Vagina (tissue), 2 donors: ENCODE measurements at regions of chr3 and their contacts with region 1.

Region 1: DNA sequence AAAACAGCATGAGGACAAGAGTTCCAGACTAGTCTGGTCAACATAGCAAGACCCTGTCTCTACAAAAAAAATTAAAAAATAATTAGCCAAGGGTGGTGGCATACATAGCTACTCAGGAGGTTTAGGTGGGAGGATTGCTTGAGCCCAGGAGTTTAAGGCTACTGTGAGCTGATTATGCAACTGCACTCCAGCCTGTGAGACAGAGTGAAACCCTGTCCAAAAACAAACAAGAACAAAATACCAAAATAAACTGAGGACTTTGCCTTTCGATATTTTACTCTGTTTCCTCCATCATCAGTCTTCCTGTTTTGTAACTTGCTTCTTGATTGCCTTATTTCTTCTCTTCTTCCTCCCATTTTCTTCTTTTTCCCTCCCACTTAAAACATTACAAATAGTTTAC is 504.4 kb downstream of the ROBO1 start:
- DNase-seq: no peak
- H3K4me3 ChIP-seq: no peak overlapping the region
- H3K27ac ChIP-seq: no peak overlapping the region
- H3K4me1 ChIP-seq: no peaks in the 10 kb centered on the region
- H3K27me3 ChIP-seq: no peaks in the 10 kb centered on the region
- CTCF ChIP-seq: no peak
- POLR2A ChIP-seq: no peak

Region 2: GRCh38 chr3:79148786-79149185 is 114.6 kb before region 1 on chr3:
- intact Hi-C with region 1: no loop called
- DNase-seq: no peak
- H3K4me3 ChIP-seq: no peak overlapping the region
- H3K27ac ChIP-seq: no peak overlapping the region
- H3K4me1 ChIP-seq: no peaks in the 10 kb centered on the region
- H3K27me3 ChIP-seq: no peaks in the 10 kb centered on the region
- CTCF ChIP-seq: no peak
- POLR2A ChIP-seq: no peak

Region 3: DNA sequence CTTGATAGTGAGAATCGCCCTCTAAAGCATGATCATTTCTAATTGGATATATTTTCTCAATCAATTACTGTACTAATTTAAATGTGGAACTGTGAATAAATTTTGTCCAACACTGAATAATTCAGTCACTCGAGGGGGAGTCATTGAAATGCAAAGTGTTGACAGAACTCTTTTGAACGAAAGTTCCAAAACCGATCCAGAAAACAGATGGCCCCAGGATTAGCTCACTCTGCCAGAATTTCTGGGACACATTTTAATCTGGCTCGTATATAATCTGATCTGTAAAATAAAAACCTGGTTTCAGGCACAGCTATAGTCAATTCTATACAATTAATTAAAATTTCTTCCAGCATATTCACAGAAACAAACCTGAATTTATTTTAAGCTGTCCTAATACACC is 76.0 kb before region 1 on chr3:
- intact Hi-C with region 1: no loop called
- DNase-seq: no peak
- H3K4me3 ChIP-seq: no peak overlapping the region
- H3K27ac ChIP-seq: no peak overlapping the region
- H3K4me1 ChIP-seq: no peaks in the 10 kb centered on the region
- H3K27me3 ChIP-seq: no peaks in the 10 kb centered on the region
- CTCF ChIP-seq: no peak
- POLR2A ChIP-seq: no peak

Region 4: DNA sequence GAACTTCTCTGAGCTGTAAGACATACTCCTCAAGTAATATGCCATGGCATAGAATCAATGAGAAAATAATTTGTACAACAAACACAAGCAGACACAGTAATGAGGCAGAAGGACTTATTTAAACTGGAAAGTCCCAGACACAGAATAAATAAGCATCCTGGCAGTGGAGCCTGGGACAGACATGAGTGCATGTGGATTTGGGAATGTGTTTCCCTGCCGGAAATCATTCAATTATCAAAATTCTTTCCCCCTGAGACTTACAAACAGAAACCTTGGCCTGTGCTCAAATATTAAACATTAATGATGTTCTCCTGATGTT is 15.7 kb before region 1 on chr3:
- intact Hi-C with region 1: loop called (anchors 2 kb)
- DNase-seq: no peak
- H3K4me3 ChIP-seq: no peak overlapping the region
- H3K27ac ChIP-seq: no peak overlapping the region
- H3K4me1 ChIP-seq: peaks cover 7% of the 10 kb centered on the region
- H3K27me3 ChIP-seq: no peaks in the 10 kb centered on the region
- CTCF ChIP-seq: no peak
- POLR2A ChIP-seq: no peak